ENCODE measurements at regions of chr3 and their contacts with region 1.

Region 1: DNA sequence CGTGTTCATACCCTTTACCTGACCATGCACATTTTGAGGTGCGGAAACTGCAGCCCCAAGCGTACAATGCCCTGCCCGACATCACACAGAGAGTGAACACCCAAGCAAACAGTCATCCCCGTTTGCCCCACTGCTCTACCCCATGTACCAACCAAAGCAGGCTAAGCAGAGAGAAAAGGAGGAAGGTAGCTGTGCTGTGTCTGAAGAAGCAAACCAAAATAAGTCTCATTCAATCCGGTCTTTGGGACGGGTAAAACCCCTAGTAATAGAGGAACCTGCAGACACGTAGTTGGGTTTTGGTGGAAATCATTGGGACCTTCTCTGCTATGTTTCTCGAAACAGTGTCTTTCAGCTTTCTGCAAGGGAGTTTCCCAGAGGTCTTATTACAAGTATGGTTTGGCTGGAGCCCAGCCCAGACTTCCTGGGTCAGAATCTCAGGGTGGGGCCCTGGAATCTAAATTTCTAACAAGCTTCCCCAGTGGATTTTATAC is 164.6 kb upstream of the HES1 start:
- DNase-seq: peak; percentile 86
- ATAC-seq: peak; percentile 97
- H3K4me3 ChIP-seq: peak overlapping the region in 3 of 5 experiments; percentile 16 to 43 (median 40)
- H3K4me3 Mint-ChIP-seq: peak overlapping the region; percentile 84
- H3K27ac ChIP-seq: peak overlapping the region; percentile 13 to 28
- H3K27ac Mint-ChIP-seq: peak overlapping the region; percentile 85
- H3K4me1 ChIP-seq: peaks cover 17 to 22% of the 10 kb centered on the region in 2 donors
- H3K4me1 Mint-ChIP-seq: peaks cover 26% of the 10 kb centered on the region
- H3K27me3 ChIP-seq: peaks cover 0 to 15% (median 4%) of the 10 kb centered on the region in 4 experiments
- H3K27me3 Mint-ChIP-seq: peaks cover 17% of the 10 kb centered on the region
- CTCF ChIP-seq: no peak

Region 2: DNA sequence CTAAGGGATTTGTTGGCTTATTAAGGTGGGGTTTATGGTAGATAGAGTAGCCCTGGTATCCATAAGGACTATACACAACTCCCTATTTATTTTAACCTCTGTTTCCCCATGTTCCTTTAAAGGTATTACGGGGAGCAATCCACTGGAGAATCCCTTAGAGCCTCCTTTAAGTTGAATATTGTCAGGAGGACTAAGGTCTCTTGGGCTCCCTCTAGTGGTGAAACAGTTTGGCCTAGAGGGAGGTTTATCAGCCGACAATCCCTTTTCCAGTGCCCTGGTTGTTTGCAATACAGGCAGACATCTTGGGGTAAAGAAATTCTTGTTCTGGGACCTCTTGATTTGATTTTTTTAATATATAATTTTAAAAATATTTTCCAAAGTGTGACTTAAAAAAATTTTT is 365.4 kb before region 1 on chr3:
- CTCF ChIA-PET with region 1: no interaction called
- POLR2A ChIA-PET with region 1: no interaction called
- intact Hi-C with region 1: no loop called
- DNase-seq: peak; percentile 69
- ATAC-seq: peak; percentile 61
- H3K4me3 ChIP-seq: no peak overlapping the region
- H3K4me3 Mint-ChIP-seq: no peak overlapping the region
- H3K27ac ChIP-seq: no peak overlapping the region
- H3K27ac Mint-ChIP-seq: no peak overlapping the region
- H3K4me1 ChIP-seq: no peaks in the 10 kb centered on the region
- H3K4me1 Mint-ChIP-seq: peaks cover 35% of the 10 kb centered on the region
- H3K27me3 ChIP-seq: no peaks in the 10 kb centered on the region
- H3K27me3 Mint-ChIP-seq: no peaks in the 10 kb centered on the region
- CTCF ChIP-seq: peak; percentile 92

Region 3: DNA sequence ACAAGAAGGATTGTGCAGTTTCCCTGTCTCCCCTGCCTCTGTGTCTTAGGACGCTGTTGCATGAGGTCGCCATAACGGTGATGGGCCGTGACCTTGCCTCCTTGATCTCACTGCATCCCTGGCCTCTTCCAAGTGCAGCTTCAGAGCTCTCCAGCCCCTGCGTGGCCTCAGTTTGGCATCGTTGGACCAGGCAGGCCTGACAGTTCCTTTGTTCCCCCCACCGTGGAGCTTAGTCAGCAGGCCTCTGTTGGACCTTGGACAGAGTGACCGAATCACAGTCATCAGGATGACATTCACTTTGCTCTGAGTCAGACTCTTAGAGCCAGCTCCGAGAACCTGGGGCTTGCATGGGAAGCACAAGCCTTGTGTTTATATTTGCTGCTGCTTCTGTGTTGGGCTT is 238.9 kb before region 1 on chr3:
- CTCF ChIA-PET with region 1: no interaction called
- POLR2A ChIA-PET with region 1: no interaction called
- intact Hi-C with region 1: no loop called
- DNase-seq: no peak
- ATAC-seq: no peak
- H3K4me3 ChIP-seq: no peak overlapping the region
- H3K4me3 Mint-ChIP-seq: no peak overlapping the region
- H3K27ac ChIP-seq: no peak overlapping the region
- H3K27ac Mint-ChIP-seq: no peak overlapping the region
- H3K4me1 ChIP-seq: peaks cover 6 to 8% of the 10 kb centered on the region in 2 donors
- H3K4me1 Mint-ChIP-seq: peaks cover 11% of the 10 kb centered on the region
- H3K27me3 ChIP-seq: no peaks in the 10 kb centered on the region
- H3K27me3 Mint-ChIP-seq: no peaks in the 10 kb centered on the region
- CTCF ChIP-seq: no peak

Region 4: DNA sequence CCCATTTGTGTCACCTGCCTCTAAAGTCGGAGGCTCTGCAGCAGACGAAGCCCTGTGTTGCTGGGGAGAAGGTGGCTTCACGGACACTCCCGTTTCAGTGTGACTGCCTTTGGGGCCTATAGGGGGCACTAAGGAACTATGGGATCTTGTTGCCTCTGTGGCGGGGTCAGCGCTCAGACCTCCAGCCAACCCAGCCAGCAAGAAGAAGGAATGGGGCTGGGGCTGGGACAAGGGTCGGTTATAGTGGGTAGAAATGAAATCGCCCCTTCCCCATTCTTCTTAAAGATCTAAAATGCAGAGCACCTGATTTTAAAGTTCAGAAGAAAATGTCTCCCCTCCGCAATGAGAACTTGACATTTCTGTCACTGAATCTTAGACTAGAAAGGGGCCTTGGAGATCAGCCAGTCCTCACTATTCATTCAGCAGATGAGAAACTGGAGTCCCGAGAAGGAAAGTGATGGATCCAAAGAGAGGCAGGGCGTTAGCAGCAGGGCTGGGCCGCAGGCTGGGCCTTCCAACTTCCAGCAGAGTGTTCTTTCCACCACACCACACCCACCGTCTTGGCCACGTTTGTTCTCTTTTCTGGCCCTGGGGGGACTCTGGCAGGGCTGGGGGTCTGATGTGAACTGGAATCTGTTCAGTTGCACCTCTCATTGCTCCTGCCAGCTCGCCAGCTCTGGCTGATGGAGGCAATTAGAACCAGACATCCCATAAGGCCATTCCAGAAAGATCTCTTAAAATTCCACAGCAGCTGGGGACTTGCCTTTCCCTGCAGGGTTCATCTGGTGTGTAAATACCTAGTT is 182.9 kb before region 1 on chr3:
- CTCF ChIA-PET with region 1: interaction called, 5 read pairs
- POLR2A ChIA-PET with region 1: no interaction called
- intact Hi-C with region 1: loop called (anchors 2 kb)
- DNase-seq: peak; percentile 79
- ATAC-seq: peak; percentile 88
- H3K4me3 ChIP-seq: no peak overlapping the region
- H3K4me3 Mint-ChIP-seq: no peak overlapping the region
- H3K27ac ChIP-seq: no peak overlapping the region
- H3K27ac Mint-ChIP-seq: peak overlapping the region; percentile 57
- H3K4me1 ChIP-seq: peaks cover 12 to 17% of the 10 kb centered on the region in 2 donors
- H3K4me1 Mint-ChIP-seq: peaks cover 14% of the 10 kb centered on the region
- H3K27me3 ChIP-seq: peaks cover 0 to 44% (median 5%) of the 10 kb centered on the region in 4 experiments
- H3K27me3 Mint-ChIP-seq: peaks cover 54% of the 10 kb centered on the region
- CTCF ChIP-seq: peak; percentile 82

Region 5: GRCh38 chr3:194003125-194004057 is 32.1 kb after region 1 on chr3:
- CTCF ChIA-PET with region 1: interaction called, 5 read pairs
- POLR2A ChIA-PET with region 1: interaction called, 3 read pairs
- intact Hi-C with region 1: loop called (anchors 2 kb)
- DNase-seq: peak; percentile 69
- ATAC-seq: peak; percentile 93
- H3K4me3 ChIP-seq: peak overlapping the region in 4 of 5 experiments; percentile 31 to 76 (median 56)
- H3K4me3 Mint-ChIP-seq: peak overlapping the region; percentile 85
- H3K27ac ChIP-seq: peak overlapping the region in 1 of 2 donors; percentile 22
- H3K27ac Mint-ChIP-seq: peak overlapping the region; percentile 61
- H3K4me1 ChIP-seq: peaks cover 32 to 38% of the 10 kb centered on the region in 2 donors
- H3K4me1 Mint-ChIP-seq: peaks cover 33% of the 10 kb centered on the region
- H3K27me3 ChIP-seq: peaks cover 0 to 18% (median 0%) of the 10 kb centered on the region in 4 experiments
- H3K27me3 Mint-ChIP-seq: peaks cover 13% of the 10 kb centered on the region
- CTCF ChIP-seq: no peak

Region 6: DNA sequence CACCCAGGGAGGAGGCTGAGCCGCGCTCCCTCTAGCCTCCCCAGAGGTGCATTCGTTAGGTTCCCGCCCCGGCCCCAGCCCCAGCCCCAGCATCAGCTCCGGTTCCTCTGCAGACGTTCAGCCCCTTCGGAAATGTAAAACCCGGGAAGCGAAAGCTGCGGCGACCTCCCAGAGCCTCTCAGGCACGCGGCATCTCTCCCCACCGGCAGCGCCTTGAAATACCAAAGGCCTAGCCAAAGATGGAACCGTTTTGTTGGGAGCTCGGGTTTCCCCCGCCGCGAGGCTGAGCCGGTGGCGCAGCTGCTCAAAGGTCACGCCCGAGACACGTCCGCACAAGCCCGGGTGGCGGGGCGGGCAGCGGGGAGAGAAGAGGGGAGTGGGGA is 86.9 kb after region 1 on chr3:
- CTCF ChIA-PET with region 1: interaction called, 3 read pairs
- POLR2A ChIA-PET with region 1: no interaction called
- intact Hi-C with region 1: loop called (anchors 5 kb)
- DNase-seq: peak; percentile 62
- ATAC-seq: peak; percentile 79
- H3K4me3 ChIP-seq: peak overlapping the region in 4 of 5 experiments; percentile 29 to 59 (median 53)
- H3K4me3 Mint-ChIP-seq: peak overlapping the region; percentile 77
- H3K27ac ChIP-seq: no peak overlapping the region
- H3K27ac Mint-ChIP-seq: peak overlapping the region; percentile 7
- H3K4me1 ChIP-seq: peaks cover 15 to 20% of the 10 kb centered on the region in 2 donors
- H3K4me1 Mint-ChIP-seq: peaks cover 18% of the 10 kb centered on the region
- H3K27me3 ChIP-seq: no peaks in the 10 kb centered on the region
- H3K27me3 Mint-ChIP-seq: no peaks in the 10 kb centered on the region
- CTCF ChIP-seq: no peak

Region 7: GRCh38 chr3:194103983-194104751 is 132.9 kb after region 1 on chr3:
- CTCF ChIA-PET with region 1: interaction called, 5 read pairs
- POLR2A ChIA-PET with region 1: interaction called, 3 read pairs
- intact Hi-C with region 1: loop called (anchors 1 kb)
- DNase-seq: peak; percentile 94
- ATAC-seq: peak; percentile 88
- H3K4me3 ChIP-seq: peak overlapping the region; percentile 10 to 63 (median 42)
- H3K4me3 Mint-ChIP-seq: peak overlapping the region; percentile 81
- H3K27ac ChIP-seq: peak overlapping the region; percentile 93 to 97
- H3K27ac Mint-ChIP-seq: peak overlapping the region; percentile 81
- H3K4me1 ChIP-seq: peaks cover 85 to 93% of the 10 kb centered on the region in 2 donors
- H3K4me1 Mint-ChIP-seq: peaks cover 88% of the 10 kb centered on the region
- H3K27me3 ChIP-seq: no peaks in the 10 kb centered on the region
- H3K27me3 Mint-ChIP-seq: no peaks in the 10 kb centered on the region
- CTCF ChIP-seq: no peak